WTC11 (cell line): ENCODE measurements at regions of chr20 and their contacts with region 1.

Region 1: GRCh38 chr20:38337561-38338140 is 8.6 kb upstream of the LBP start:
- DNase-seq: peak; percentile 97
- ATAC-seq: peak; percentile 76
- H3K4me3 Mint-ChIP-seq: no peak overlapping the region
- H3K27ac Mint-ChIP-seq: no peak overlapping the region
- H3K4me1 Mint-ChIP-seq: peaks cover 35% of the 10 kb centered on the region
- H3K27me3 Mint-ChIP-seq: no peaks in the 10 kb centered on the region; the same call in 1 of the 2 replicates
- CTCF ChIP-seq: peak; percentile 96

Region 2: GRCh38 chr20:38298705-38299288 is 38.9 kb before region 1 on chr20:
- CTCF ChIA-PET with region 1: interaction called, 13 read pairs
- POLR2A ChIA-PET with region 1: no interaction called
- DNase-seq: no peak
- ATAC-seq: no peak
- H3K4me3 Mint-ChIP-seq: no peak overlapping the region
- H3K27ac Mint-ChIP-seq: peak overlapping the region; percentile 84; the same call in 1 of the 2 replicates
- H3K4me1 Mint-ChIP-seq: peaks cover 13% of the 10 kb centered on the region
- H3K27me3 Mint-ChIP-seq: no peaks in the 10 kb centered on the region
- CTCF ChIP-seq: no peak

Region 3: DNA sequence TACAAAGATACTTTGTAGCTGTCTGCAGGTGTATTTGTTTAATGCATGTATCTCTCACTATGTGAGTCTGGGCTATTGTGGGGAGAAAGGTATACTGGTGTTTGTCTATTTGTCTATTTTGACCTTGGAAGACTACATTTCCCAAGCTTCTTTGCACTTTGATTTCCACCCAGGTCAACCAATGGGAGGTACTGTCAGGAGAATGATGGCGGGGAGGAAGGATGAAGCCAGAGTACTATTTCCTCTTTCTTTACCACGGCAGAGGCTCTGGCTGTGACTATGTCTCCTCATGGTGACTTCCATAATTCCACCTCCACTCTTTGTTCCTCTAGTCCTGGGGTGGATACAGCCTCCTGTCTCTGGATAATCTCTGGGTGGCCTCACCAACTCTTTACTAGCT is 31.7 kb after region 1 on chr20:
- CTCF ChIA-PET with region 1: interaction called, 20 read pairs
- POLR2A ChIA-PET with region 1: no interaction called
- DNase-seq: no peak
- ATAC-seq: peak; percentile 96
- H3K4me3 Mint-ChIP-seq: peak overlapping the region; percentile 16; the same call in 1 of the 2 replicates
- H3K27ac Mint-ChIP-seq: peak overlapping the region; percentile 64; the same call in 1 of the 2 replicates
- H3K4me1 Mint-ChIP-seq: peaks cover 3% of the 10 kb centered on the region; the same call in 1 of the 2 replicates
- H3K27me3 Mint-ChIP-seq: no peaks in the 10 kb centered on the region
- CTCF ChIP-seq: no peak

Region 4: DNA sequence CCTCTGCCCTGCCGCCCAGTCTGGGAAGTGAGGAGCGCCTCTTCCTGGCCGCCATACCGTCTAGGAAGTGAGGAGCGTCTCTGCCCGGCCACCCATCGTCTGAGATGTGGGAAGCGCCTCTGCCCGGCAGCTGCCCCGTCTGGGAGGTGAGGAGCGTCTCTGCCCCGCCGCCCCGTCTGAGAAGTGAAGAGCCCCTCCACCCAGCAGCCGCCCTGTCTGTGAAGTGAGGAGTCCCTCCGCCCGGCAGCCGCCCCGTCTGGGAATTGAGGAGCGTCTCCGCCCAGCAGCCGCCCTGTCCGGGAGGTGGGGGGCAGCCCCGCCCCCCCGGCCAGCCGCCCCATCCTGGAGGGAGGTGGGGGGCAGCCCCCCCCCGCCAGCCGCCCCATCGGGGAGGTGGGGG is 69.7 kb after region 1 on chr20:
- CTCF ChIA-PET with region 1: interaction called, 208 read pairs
- POLR2A ChIA-PET with region 1: interaction called, 5 read pairs
- DNase-seq: no peak
- ATAC-seq: no peak
- H3K4me3 Mint-ChIP-seq: no peak overlapping the region
- H3K27ac Mint-ChIP-seq: no peak overlapping the region
- H3K4me1 Mint-ChIP-seq: peaks cover 2% of the 10 kb centered on the region; the same call in 1 of the 2 replicates
- H3K27me3 Mint-ChIP-seq: no peaks in the 10 kb centered on the region
- CTCF ChIP-seq: no peak

Region 5: GRCh38 chr20:38418509-38419204 is 81.0 kb after region 1 on chr20:
- CTCF ChIA-PET with region 1: interaction called, 21 read pairs
- POLR2A ChIA-PET with region 1: no interaction called
- DNase-seq: no peak
- ATAC-seq: peak; percentile 33
- H3K4me3 Mint-ChIP-seq: no peak overlapping the region
- H3K27ac Mint-ChIP-seq: peak overlapping the region; percentile 20; the same call in 1 of the 2 replicates
- H3K4me1 Mint-ChIP-seq: peaks cover 18% of the 10 kb centered on the region
- H3K27me3 Mint-ChIP-seq: no peaks in the 10 kb centered on the region
- CTCF ChIP-seq: no peak

Region 6: GRCh38 chr20:38472513-38473372 is 135.1 kb after region 1 on chr20 and contains the start of gene RALGAPB:
- CTCF ChIA-PET with region 1: interaction called, 21 read pairs
- POLR2A ChIA-PET with region 1: no interaction called
- DNase-seq: peak; percentile 99
- ATAC-seq: peak; percentile 97
- H3K4me3 Mint-ChIP-seq: peak within 1 kb of the TSS; percentile 89
- H3K27ac Mint-ChIP-seq: peak within 1 kb of the TSS; percentile 99
- H3K4me1 Mint-ChIP-seq: peaks cover 20% of the 10 kb centered on the region
- H3K27me3 Mint-ChIP-seq: no peaks in the 10 kb centered on the region; the same call in 1 of the 2 replicates
- CTCF ChIP-seq: no peak
- total RNA-seq, gene RALGAPB: 29.4 to 36.7 TPM (median 31.4 TPM) in 3 replicates